ENCODE measurements at regions of chr12 and their contacts with region 1.

Region 1: GRCh38 chr12:122860346-122861090 is 25.3 kb downstream of the HIP1R start:
- DNase-seq: no peak
- H3K4me3 ChIP-seq: no peak overlapping the region
- CTCF ChIP-seq: peak; percentile 95

Region 2: GRCh38 chr12:122841544-122842321 is 18.8 kb before region 1 on chr12:
- CTCF ChIA-PET with region 1: interaction called, 18 read pairs
- POLR2A ChIA-PET with region 1: interaction called, 3 read pairs
- DNase-seq: peak; percentile 49
- H3K4me3 ChIP-seq: no peak overlapping the region
- CTCF ChIP-seq: no peak

Region 3: GRCh38 chr12:122871851-122872780 is 11.6 kb after region 1 on chr12:
- CTCF ChIA-PET with region 1: interaction called, 53 read pairs
- POLR2A ChIA-PET with region 1: interaction called, 3 read pairs
- DNase-seq: no peak
- H3K4me3 ChIP-seq: peak overlapping the region; percentile 54
- CTCF ChIP-seq: no peak

Region 4: GRCh38 chr12:122880668-122881067 is 20.1 kb after region 1 on chr12:
- CTCF ChIA-PET with region 1: interaction called, 15 read pairs
- POLR2A ChIA-PET with region 1: no interaction called
- DNase-seq: no peak
- H3K4me3 ChIP-seq: no peak overlapping the region
- CTCF ChIP-seq: peak; percentile 71

Region 5: DNA sequence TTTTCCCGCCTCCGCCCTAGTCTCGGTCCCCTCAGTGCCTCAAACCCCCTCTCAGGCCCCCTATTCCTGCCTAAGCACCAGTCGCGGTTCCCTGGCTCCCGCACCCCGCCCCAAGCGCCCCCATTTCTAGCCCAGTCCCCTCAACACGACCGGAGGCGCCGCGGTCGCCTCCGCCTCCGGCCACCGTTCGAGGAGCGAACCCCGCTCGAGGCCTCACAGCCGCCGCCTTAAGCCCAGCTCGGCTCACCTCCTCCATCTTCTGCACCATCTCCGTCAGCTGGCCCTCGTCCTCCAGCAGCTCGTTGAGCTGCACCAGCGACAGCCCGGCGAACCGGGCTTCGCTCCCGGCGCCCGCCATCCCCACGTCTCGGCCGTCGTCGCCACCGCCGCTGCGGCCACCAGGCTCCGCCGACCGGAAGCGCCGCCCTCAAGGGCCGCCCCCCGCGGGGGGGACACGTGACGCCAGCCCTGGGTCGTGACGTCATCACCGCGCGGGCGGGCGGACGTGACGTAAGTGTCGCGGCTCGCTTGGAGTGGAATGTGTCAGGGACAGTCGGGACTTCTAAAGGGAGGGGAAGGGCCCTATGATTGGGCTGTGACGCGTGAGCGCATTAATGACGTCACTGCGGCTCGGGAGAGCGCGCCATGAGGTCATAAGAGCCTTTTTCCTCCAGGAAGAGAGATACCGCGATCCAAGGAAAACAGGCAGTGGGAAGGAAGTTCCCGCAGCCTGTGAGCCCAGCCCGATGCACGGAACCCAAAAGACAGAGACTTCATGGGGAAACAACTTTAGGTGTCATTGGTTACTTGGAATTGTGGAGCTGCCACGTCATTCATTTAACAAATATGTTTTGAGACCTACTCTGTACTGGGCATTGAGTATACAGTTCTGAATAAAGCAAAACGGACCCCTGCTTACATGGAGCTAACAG is 35.5 kb after region 1 on chr12 and contains the start of gene VPS37B:
- CTCF ChIA-PET with region 1: interaction called, 46 read pairs
- POLR2A ChIA-PET with region 1: no interaction called
- DNase-seq: no peak
- H3K4me3 ChIP-seq: peak within 1 kb of the TSS; percentile 80
- CTCF ChIP-seq: no peak

Region 6: DNA sequence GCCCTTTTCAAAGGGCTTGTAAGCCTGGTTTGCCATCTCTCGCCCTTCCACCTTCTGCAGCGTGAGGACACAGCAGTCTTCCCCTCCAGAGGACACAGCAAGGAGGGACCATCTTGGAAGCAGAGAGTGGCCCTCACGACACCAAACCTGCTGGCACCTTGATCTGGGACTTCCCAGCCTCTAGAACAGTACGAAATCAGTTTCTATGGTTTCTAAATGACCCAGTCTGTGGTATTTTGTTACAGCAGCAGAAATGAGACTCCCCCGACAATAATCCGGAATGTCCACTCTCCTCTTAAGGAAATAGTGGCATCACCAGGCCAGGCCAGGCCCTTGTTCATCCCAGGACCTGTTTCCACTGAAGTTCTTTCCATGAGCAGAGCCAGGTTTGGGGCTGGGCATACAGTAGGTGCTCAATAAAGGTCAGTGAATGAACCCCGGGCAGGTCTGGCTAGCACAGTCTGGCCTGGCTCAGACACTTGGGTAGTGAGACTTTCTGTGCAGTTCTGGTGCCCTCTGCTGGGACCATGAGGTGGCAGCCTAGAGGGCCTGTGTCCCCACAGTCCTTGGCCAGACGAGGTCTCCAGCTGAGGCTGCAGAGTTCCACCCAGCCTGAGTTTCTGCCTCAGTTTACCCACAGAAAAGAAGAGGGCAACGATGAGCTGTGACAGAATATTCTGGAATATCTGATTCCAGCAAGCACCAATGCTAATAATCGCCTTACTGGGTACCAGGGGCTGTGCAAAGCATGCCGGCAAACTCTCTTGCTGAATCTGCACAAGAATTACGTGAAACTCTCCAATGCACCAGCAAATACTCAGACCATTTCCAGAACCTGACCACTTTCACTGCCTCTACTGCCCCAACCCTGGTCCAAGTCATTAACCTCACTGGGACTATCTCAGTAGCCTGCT is 91.7 kb after region 1 on chr12:
- CTCF ChIA-PET with region 1: interaction called, 449 read pairs
- POLR2A ChIA-PET with region 1: interaction called, 3 read pairs
- DNase-seq: no peak
- H3K4me3 ChIP-seq: no peak overlapping the region
- CTCF ChIP-seq: peak; percentile 96

Region 7: GRCh38 chr12:122965851-122966722 is 105.6 kb after region 1 on chr12 and contains the start of gene ABCB9:
- CTCF ChIA-PET with region 1: interaction called, 18 read pairs
- POLR2A ChIA-PET with region 1: no interaction called
- DNase-seq: no peak
- H3K4me3 ChIP-seq: peak within 1 kb of the TSS; percentile 88
- CTCF ChIP-seq: peak; percentile 12

Measured in AG04449 (cell line).